HepG2 (cell line): ENCODE measurements at regions of chr2 and their contacts with region 1.

Region 1: DNA sequence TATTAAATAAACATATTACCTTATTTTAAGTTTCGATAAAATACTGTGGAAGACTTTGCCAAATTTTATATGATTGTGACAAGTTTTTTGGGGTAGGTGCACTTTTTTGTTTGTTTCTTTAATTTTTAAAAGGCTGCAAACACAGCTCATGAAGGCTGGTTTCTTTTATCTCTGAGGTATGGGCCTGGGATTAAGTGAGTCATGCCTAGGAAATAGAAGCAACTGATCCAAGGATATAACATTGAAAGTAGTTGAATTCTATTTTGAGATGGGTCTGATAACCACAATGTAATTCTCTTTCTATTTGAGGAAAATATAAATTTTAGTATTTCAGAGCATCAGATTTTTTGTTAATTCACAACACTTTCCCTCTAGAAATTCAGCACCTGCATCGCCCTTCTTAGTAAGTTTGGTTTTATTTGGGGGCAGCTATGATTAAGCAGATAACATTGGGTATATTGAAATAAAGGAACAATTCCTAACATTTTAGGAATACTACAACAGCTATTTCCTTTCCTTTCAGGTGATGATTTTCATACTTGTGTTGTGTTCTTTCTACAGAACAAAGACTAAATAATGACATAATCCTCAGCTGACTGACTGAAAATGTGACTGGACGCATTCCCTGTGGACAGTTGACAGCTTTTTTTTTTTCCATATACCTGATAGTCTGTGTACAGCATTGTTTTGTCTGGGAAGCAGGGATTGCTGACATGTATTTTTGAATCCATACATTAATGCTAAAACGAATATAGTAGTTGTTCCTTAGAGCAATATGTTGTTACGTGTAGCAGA is 16.8 kb downstream of the RBM45 start:
- DNase-seq: no peak
- ATAC-seq: no peak
- H3K4me3 ChIP-seq: no peak overlapping the region
- H3K27ac ChIP-seq: no peak overlapping the region
- H3K4me1 ChIP-seq: no peaks in the 10 kb centered on the region
- H3K27me3 ChIP-seq: no peaks in the 10 kb centered on the region
- CTCF ChIP-seq: no peak
- EP300 ChIP-seq: no peak
- POLR2A ChIP-seq: no peak
- RAD21 ChIP-seq: no peak

Region 2: GRCh38 chr2:178177066-178177679 is 48.1 kb after region 1 on chr2:
- CTCF ChIA-PET with region 1: no interaction called
- POLR2A ChIA-PET with region 1: no interaction called
- in situ Hi-C with region 1: no loop called
- intact Hi-C with region 1: no loop called
- DNase-seq: no peak
- ATAC-seq: no peak
- H3K4me3 ChIP-seq: no peak overlapping the region
- H3K27ac ChIP-seq: no peak overlapping the region
- H3K4me1 ChIP-seq: no peaks in the 10 kb centered on the region
- H3K27me3 ChIP-seq: peaks cover 0 to 11% of the 10 kb centered on the region in 2 experiments; a peak in 2 of 5 replicates
- CTCF ChIP-seq: no peak
- EP300 ChIP-seq: no peak
- POLR2A ChIP-seq: no peak
- RAD21 ChIP-seq: no peak

Region 3: GRCh38 chr2:178193823-178194599 is 65.0 kb after region 1 on chr2 and contains the start of gene OSBPL6:
- CTCF ChIA-PET with region 1: no interaction called
- POLR2A ChIA-PET with region 1: no interaction called
- in situ Hi-C with region 1: no loop called
- intact Hi-C with region 1: loop called (anchors 5 kb)
- DNase-seq: peak; percentile 28
- ATAC-seq: peak; percentile 93
- H3K4me3 ChIP-seq: peak within 1 kb of the TSS; percentile 59 to 78 (median 66)
- H3K27ac ChIP-seq: no peak within 1 kb of the TSS
- H3K4me1 ChIP-seq: peaks cover 22% of the 10 kb centered on the region
- H3K27me3 ChIP-seq: peaks cover 8 to 73% of the 10 kb centered on the region in 2 experiments
- CTCF ChIP-seq: peak; percentile 25; the same call in 1 of the 2 replicates
- EP300 ChIP-seq: no peak
- POLR2A ChIP-seq: no peak
- RAD21 ChIP-seq: peak; percentile 40
- total RNA-seq, gene OSBPL6: 0.10 and 0.11 TPM in 2 replicates

Region 4: DNA sequence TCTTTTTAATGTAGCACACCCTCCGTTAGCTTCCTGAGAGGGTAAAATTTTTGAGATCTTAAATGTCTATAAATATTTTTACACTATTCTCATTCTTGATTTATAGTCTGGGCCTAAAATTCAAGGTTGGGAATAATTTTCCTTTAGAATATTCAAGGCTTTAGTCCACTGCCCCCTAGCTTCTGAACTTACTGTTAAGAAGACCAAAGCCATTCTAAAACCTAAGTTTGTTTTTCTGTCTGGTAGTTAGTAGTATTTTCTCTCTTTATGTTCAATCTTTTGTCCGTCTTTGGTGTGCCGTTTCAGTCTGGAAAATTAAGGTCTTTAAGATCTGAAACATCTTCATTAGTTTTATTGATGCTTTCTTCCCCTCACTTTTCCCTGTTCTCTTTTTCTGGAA is 79.8 kb after region 1 on chr2:
- CTCF ChIA-PET with region 1: interaction called, 7 read pairs
- POLR2A ChIA-PET with region 1: no interaction called
- in situ Hi-C with region 1: no loop called
- intact Hi-C with region 1: loop called (anchors 1 kb)
- DNase-seq: no peak
- ATAC-seq: no peak
- H3K4me3 ChIP-seq: no peak overlapping the region
- H3K27ac ChIP-seq: no peak overlapping the region
- H3K4me1 ChIP-seq: no peaks in the 10 kb centered on the region
- H3K27me3 ChIP-seq: peaks cover 0 to 3% of the 10 kb centered on the region in 2 experiments; a peak in 1 of 5 replicates
- CTCF ChIP-seq: peak; percentile 27; the same call in 1 of the 2 replicates
- EP300 ChIP-seq: no peak
- POLR2A ChIP-seq: no peak
- RAD21 ChIP-seq: no peak

Region 5: GRCh38 chr2:178280244-178280852 is 151.3 kb after region 1 on chr2:
- CTCF ChIA-PET with region 1: interaction called, 13 read pairs
- POLR2A ChIA-PET with region 1: no interaction called
- in situ Hi-C with region 1: loop called (anchors 5 kb)
- intact Hi-C with region 1: loop called (anchors 1 kb)
- DNase-seq: peak; percentile 53
- ATAC-seq: peak; percentile 19; the same call in 1 of the 3 replicates
- H3K4me3 ChIP-seq: no peak overlapping the region
- H3K27ac ChIP-seq: no peak overlapping the region
- H3K4me1 ChIP-seq: peaks cover 30% of the 10 kb centered on the region
- H3K27me3 ChIP-seq: no peaks in the 10 kb centered on the region
- CTCF ChIP-seq: peak; percentile 65
- EP300 ChIP-seq: no peak
- POLR2A ChIP-seq: no peak
- RAD21 ChIP-seq: no peak